HepG2 (cell line): ENCODE measurements at regions of chr1 and their contacts with region 1.

Region 1: GRCh38 chr1:201511941-201512539 is 5.1 kb upstream of the CSRP1 start:
- DNase-seq: peak; percentile 22
- ATAC-seq: peak; percentile 90
- H3K4me3 ChIP-seq: peak overlapping the region; percentile 4 to 48 (median 31); a peak in 3 of 6 replicates
- H3K27ac ChIP-seq: no peak overlapping the region
- H3K4me1 ChIP-seq: peaks cover 25% of the 10 kb centered on the region
- H3K27me3 ChIP-seq: peaks cover 1 to 14% of the 10 kb centered on the region in 2 experiments; a peak in 2 of 5 replicates
- CTCF ChIP-seq: peak; percentile 15; the same call in 1 of the 2 replicates
- EP300 ChIP-seq: no peak
- POLR2A ChIP-seq: no peak
- RAD21 ChIP-seq: no peak

Region 2: GRCh38 chr1:201436393-201436792 is 75.6 kb before region 1 on chr1:
- CTCF ChIA-PET with region 1: interaction called, 12 read pairs
- POLR2A ChIA-PET with region 1: no interaction called
- in situ Hi-C with region 1: no loop called
- intact Hi-C with region 1: loop called (anchors 1 kb)
- DNase-seq: peak; percentile 36
- ATAC-seq: peak; percentile 94
- H3K4me3 ChIP-seq: no peak overlapping the region
- H3K27ac ChIP-seq: no peak overlapping the region
- H3K4me1 ChIP-seq: peaks cover 8% of the 10 kb centered on the region; the same call in 1 of the 2 replicates
- H3K27me3 ChIP-seq: 0 out of 5 replicates have a peak, but pooled peaks cover 0 to 4% of the 10 kb centered on the region in 2 experiments
- CTCF ChIP-seq: peak; percentile 42; the same call in 1 of the 2 replicates
- EP300 ChIP-seq: no peak
- POLR2A ChIP-seq: no peak
- RAD21 ChIP-seq: no peak

Region 3: GRCh38 chr1:201447911-201448871 is 63.8 kb before region 1 on chr1:
- CTCF ChIA-PET with region 1: interaction called, 40 read pairs
- POLR2A ChIA-PET with region 1: no interaction called
- in situ Hi-C with region 1: loop called (anchors 5 kb)
- intact Hi-C with region 1: loop called (anchors 1 kb)
- DNase-seq: peak; percentile 56
- ATAC-seq: peak; percentile 98
- H3K4me3 ChIP-seq: peak overlapping the region in 1 of 3 experiments; percentile 52; a peak in 1 of 6 replicates
- H3K27ac ChIP-seq: no peak overlapping the region
- H3K4me1 ChIP-seq: peaks cover 25% of the 10 kb centered on the region
- H3K27me3 ChIP-seq: peaks cover 4 to 17% of the 10 kb centered on the region in 2 experiments; a peak in 4 of 5 replicates
- CTCF ChIP-seq: peak; percentile 89
- EP300 ChIP-seq: no peak
- POLR2A ChIP-seq: no peak
- RAD21 ChIP-seq: peak; percentile 70

Region 4: DNA sequence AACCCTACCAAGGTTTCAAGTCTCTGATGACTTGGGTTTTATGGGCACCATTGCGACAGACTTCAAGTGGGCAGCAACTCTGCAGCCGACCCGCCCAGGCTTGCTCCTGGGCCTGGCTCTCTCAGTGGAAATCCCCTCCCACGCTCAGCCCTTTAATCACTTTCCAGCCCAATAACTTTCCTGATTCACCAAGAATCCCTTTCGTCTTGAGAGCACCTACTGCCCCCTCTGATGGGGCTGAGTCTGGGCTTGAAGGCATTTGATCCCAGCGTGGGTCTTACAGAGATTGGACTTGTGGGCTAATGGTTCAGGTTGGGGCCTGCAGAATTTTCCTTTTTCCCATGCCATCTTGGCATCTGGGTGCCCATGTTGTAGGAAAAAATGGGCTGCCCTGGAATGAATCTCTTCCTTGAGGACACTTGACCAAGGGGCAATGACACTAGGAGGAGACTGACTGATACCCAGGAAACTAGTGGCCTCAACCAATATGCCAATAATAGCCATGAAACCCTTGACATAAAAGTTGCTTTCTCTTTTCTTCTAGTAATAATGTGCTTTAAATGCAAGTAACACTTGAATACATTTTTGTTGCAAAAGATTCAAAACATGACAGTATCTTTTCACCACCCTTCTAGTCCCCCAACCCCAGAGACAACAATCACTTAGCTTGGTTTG is 35.2 kb before region 1 on chr1:
- CTCF ChIA-PET with region 1: interaction called, 226 read pairs
- POLR2A ChIA-PET with region 1: interaction called, 45 read pairs
- in situ Hi-C with region 1: loop called (anchors 5 kb)
- intact Hi-C with region 1: loop called (anchors 1 kb)
- DNase-seq: no peak
- ATAC-seq: no peak
- H3K4me3 ChIP-seq: no peak overlapping the region
- H3K27ac ChIP-seq: no peak overlapping the region
- H3K4me1 ChIP-seq: peaks cover 18% of the 10 kb centered on the region
- H3K27me3 ChIP-seq: peaks cover 4 to 45% of the 10 kb centered on the region in 2 experiments; a peak in 3 of 5 replicates
- CTCF ChIP-seq: no peak
- EP300 ChIP-seq: no peak
- POLR2A ChIP-seq: no peak
- RAD21 ChIP-seq: no peak

Region 5: DNA sequence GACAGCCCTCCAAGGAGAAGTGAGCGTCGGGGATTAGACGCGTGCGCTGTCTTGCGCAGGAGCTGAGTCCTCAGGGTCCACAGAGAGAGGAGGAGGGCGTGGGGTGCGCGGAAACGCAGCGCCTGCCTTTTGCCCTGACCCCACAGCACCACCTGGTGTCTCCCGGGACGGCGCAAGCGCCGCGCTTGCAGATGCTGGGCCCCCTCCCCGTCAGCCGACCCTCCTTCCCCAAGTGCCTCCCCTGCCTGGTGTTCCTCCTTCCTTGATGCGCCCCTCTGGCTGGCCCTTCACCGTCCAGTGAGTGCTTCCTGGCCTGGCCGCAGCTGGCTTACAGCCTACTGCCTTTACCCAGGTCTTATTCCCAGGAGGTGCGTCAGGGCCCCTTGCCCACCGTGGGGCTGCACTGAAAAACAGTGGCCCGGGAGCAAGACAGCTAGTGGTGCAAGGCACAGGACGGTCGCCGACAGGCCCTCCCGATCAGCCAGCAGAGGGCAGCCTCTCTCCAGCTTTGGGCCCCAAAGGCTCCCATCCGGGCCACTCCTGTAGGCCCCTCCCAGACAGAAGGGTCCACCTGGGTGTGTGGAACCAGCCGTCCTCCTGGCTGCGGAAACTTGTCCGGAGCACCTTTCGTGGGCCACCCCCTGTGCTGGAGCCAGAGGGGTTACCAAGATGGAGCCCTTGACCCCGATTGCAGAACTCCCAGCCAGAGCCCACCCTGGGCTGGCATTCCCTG is 30.1 kb before region 1 on chr1:
- CTCF ChIA-PET with region 1: interaction called, 226 read pairs
- POLR2A ChIA-PET with region 1: interaction called, 45 read pairs
- in situ Hi-C with region 1: loop called (anchors 5 kb)
- intact Hi-C with region 1: loop called (anchors 1 kb)
- DNase-seq: peak; percentile 73
- ATAC-seq: peak; percentile 95
- H3K4me3 ChIP-seq: peak overlapping the region in 2 of 3 experiments; percentile 27 to 57; a peak in 2 of 6 replicates
- H3K27ac ChIP-seq: no peak overlapping the region
- H3K4me1 ChIP-seq: peaks cover 29% of the 10 kb centered on the region
- H3K27me3 ChIP-seq: peaks cover 1 to 30% of the 10 kb centered on the region in 2 experiments; a peak in 3 of 5 replicates
- CTCF ChIP-seq: peak; percentile 97
- EP300 ChIP-seq: no peak
- POLR2A ChIP-seq: no peak
- RAD21 ChIP-seq: peak; percentile 99

Region 6: DNA sequence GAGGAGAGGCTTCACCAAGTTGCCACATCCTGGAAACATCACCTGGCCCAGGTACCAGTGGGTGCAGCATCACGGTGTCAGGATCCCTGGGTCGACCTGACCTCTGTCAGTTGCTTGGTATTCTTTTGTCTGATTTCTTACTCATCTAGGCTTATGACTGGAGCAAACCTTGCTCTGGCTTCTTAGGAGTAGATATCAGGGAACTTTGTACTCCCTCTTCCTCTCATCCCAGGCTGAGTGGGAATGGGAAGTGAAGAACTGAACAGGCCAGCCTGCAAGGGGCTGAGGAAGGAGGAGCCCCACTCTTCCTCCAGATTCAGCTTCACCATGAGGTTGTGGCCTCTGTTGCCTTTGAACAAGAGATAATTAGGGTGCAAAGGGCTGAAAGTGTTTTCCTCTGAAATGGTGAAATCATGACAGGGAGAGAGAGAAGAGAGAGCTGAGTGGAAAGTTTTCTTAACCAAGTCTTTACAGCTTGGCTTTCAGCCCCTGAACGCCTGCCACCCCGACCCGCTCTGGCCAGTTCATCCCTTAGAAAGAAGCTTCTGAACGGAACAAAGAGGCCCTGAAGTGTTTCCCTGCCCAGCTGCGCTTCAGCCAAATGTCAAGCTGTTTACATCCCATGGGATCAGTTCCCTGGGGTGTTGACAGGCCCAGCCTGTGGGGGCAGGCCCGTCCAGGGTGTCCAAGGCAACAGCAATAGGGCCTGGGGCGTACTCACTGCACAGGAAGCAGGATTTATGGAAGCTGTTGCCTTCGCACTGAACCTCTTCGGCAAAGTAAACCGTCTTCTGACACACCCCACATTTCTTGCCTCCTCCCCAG is 16.4 kb before region 1 on chr1:
- CTCF ChIA-PET with region 1: interaction called, 3 read pairs
- POLR2A ChIA-PET with region 1: interaction called, 11 read pairs
- in situ Hi-C with region 1: no loop called
- intact Hi-C with region 1: loop called (anchors 2 kb)
- DNase-seq: peak; percentile 84
- ATAC-seq: peak; percentile 86
- H3K4me3 ChIP-seq: peak overlapping the region in 1 of 3 experiments; percentile 29; a peak in 2 of 6 replicates
- H3K27ac ChIP-seq: peak overlapping the region; percentile 83
- H3K4me1 ChIP-seq: peaks cover 60% of the 10 kb centered on the region
- H3K27me3 ChIP-seq: no peaks in the 10 kb centered on the region
- CTCF ChIP-seq: 0 out of 2 replicates have a peak, but pooled peaks have one; percentile 17
- EP300 ChIP-seq: peak in 1 of 2 experiments; percentile 72; a peak in 2 of 4 replicates
- POLR2A ChIP-seq: no peak; a peak in 1 of 4 replicates
- RAD21 ChIP-seq: no peak

Region 7: DNA sequence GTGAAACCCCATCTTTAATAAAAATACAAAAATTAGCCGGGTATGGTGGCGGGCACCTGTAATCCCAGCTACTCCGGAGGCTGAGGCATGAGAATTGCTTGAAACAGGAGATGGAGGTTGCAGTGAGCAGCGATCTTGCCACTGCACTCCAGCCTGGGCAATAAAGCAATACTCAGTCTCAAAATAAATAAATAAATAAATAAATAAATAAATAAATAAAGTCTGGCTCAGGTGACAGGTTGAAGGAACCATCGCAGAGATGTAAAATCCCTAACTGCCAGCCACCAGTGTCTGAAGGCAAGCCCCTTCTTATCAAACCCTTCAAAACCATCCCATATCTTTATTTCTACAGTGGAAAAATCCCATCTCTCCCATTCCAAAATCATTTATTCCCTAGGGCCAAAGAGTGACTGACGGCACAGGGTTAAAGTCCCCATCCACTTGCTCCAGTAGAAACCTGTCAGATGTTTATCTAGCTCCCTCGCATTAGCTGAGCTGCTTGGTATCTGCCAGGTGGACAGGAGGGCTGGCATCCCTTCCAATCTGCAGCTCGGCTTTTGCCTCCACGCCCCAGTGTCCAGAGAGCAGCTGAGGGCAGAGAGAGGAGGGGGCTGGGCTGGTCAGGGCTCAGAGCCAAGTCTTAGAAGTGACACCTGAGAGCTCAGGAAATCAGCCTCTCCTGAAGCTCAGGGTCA is 10.1 kb before region 1 on chr1:
- CTCF ChIA-PET with region 1: interaction called, 7 read pairs
- POLR2A ChIA-PET with region 1: interaction called, 16 read pairs
- in situ Hi-C with region 1: no loop called
- intact Hi-C with region 1: no loop called
- DNase-seq: no peak
- ATAC-seq: 0 out of 3 replicates have a peak, but pooled peaks have one; percentile 3
- H3K4me3 ChIP-seq: no peak overlapping the region
- H3K27ac ChIP-seq: peak overlapping the region; percentile 43
- H3K4me1 ChIP-seq: peaks cover 82% of the 10 kb centered on the region
- H3K27me3 ChIP-seq: no peaks in the 10 kb centered on the region; a peak in 1 of 5 replicates
- CTCF ChIP-seq: no peak
- EP300 ChIP-seq: no peak
- POLR2A ChIP-seq: no peak
- RAD21 ChIP-seq: no peak

Region 8: DNA sequence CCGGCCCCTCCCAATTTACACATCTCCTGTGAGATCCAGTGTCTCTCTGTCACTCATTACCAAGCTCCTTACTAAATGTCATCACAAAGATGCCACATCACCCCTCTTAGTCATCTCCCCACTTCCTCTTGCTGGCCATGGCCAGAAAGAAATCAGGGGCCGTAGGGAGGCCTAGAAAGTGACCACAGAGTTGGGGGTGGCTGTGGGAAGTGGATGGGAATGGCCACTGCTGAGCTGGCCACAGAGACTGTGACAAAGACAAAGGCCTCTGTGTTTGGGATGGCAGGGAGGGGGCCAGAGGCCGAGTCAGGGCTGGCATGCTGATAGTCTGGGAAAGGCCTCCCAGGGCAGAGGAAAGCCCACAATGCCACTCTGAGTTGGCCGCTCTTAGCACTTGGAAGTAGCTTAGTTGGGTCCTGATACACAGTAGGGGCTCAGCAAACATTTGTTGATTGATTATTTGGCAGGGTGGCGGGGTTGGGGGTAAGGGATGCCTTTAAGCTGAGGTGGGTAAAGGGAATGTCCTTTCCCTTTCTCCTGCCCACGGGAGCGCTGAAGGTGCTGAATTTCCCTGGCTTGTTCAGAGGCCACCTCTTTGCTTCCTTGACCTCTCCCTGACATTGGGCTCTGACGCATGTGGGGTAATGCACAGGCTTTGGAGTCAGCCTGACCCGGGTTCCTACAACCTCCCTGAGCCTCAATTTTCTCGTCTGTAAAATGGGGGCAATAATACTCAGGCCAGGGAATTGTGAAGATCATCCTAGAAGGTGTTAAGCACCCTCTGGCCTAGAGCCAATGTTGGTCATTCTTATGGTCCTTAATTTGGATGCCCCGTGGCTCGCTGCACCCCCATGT is 40.1 kb after region 1 on chr1:
- CTCF ChIA-PET with region 1: no interaction called
- POLR2A ChIA-PET with region 1: no interaction called
- in situ Hi-C with region 1: no loop called
- intact Hi-C with region 1: no loop called
- DNase-seq: no peak
- ATAC-seq: no peak
- H3K4me3 ChIP-seq: no peak overlapping the region
- H3K27ac ChIP-seq: no peak overlapping the region
- H3K4me1 ChIP-seq: no peaks in the 10 kb centered on the region
- H3K27me3 ChIP-seq: peaks cover 2 to 30% of the 10 kb centered on the region in 2 experiments; a peak in 3 of 5 replicates
- CTCF ChIP-seq: no peak
- EP300 ChIP-seq: no peak
- POLR2A ChIP-seq: no peak
- RAD21 ChIP-seq: no peak